ENCODE measurements at regions of chr7 and their contacts with region 1.

Region 1: GRCh38 chr7:138903186-138903820 is 77.9 kb downstream of the KIAA1549 start:
- DNase-seq: peak; percentile 86 to 91 (median 89)
- H3K4me3 ChIP-seq: no peak overlapping the region
- H3K4me3 Mint-ChIP-seq: peak overlapping the region; percentile 77 to 94 (median 85)
- H3K27ac ChIP-seq: no peak overlapping the region
- H3K27ac Mint-ChIP-seq: peak overlapping the region; percentile 57 to 99 (median 91)
- H3K4me1 ChIP-seq: peaks cover 38% of the 10 kb centered on the region
- H3K4me1 Mint-ChIP-seq: peaks cover 24 to 52% (median 31%) of the 10 kb centered on the region in 4 donors
- H3K27me3 ChIP-seq: no peaks in the 10 kb centered on the region
- H3K27me3 Mint-ChIP-seq: peaks cover 6 to 11% of the 10 kb centered on the region in 2 donors

Region 2: GRCh38 chr7:138645290-138645689 is 258.0 kb before region 1 on chr7:
- CTCF ChIA-PET with region 1: no interaction called
- POLR2A ChIA-PET with region 1: no interaction called
- intact Hi-C with region 1: no loop called
- DNase-seq: no peak
- H3K4me3 ChIP-seq: no peak overlapping the region
- H3K4me3 Mint-ChIP-seq: no peak overlapping the region
- H3K27ac ChIP-seq: no peak overlapping the region
- H3K27ac Mint-ChIP-seq: no peak overlapping the region
- H3K4me1 ChIP-seq: no peaks in the 10 kb centered on the region
- H3K4me1 Mint-ChIP-seq: peaks cover 0 to 1% (median 0%) of the 10 kb centered on the region in 4 donors
- H3K27me3 ChIP-seq: no peaks in the 10 kb centered on the region
- H3K27me3 Mint-ChIP-seq: peaks cover 0 to 4% of the 10 kb centered on the region in 2 donors

Region 3: DNA sequence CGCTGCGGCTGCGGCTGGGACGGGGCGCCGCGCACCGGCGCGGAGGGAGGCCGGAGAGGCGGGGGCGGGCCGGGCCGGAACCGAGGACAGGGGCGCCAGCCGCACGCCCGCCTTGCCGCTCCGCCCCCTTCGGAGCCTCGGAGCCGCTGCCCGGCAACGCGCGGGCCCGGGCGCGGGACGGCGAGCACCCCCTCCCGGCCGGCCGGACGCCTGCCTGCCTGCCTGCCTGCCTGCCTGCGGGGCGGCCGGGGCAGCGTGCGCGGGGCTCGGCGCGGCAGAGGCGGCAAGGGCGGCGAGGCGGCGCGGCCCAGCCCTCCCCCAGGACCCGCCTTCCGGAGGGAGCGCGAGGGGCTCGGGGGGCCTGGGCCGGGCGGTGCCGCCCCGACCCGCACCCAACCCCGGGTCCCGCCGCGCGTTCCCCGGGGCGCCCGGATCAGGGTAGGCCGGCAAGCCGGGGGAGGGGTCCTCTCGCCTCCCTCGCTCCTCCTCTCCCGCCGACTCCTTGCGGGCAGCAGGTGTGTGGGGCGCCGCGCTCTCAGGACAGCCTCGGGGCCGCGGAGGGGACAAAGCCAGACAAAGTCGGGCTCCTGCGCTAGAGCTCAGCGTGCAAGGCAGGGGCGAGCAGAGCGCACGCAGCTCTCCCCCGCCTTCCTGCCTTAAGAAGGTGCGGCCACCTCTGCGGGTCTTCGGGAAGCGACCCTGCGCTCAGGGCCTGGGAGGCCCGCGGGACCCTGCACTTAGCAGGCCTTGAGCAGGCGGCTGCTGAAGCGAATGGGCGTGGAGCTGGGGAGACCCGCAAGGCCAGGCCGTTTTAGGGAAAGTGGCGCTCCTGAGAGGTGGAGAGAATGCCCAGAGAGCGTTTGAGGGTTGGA is 78.3 kb after region 1 on chr7 and contains the start of gene KIAA1549:
- CTCF ChIA-PET with region 1: interaction called, 3 read pairs
- POLR2A ChIA-PET with region 1: no interaction called
- intact Hi-C with region 1: loop called (anchors 2 kb)
- DNase-seq: peak in 4 of 5 donors; percentile 29 to 41 (median 36)
- H3K4me3 ChIP-seq: peak within 1 kb of the TSS in 1 of 2 donors; percentile 43
- H3K4me3 Mint-ChIP-seq: peak within 1 kb of the TSS; percentile 86 to 90 (median 89)
- H3K27ac ChIP-seq: no peak within 1 kb of the TSS
- H3K27ac Mint-ChIP-seq: peak within 1 kb of the TSS in 6 of 7 donors; percentile 30 to 86 (median 62)
- H3K4me1 ChIP-seq: peaks cover 6% of the 10 kb centered on the region
- H3K4me1 Mint-ChIP-seq: peaks cover 9 to 26% (median 12%) of the 10 kb centered on the region in 4 donors
- H3K27me3 ChIP-seq: peaks cover 22% of the 10 kb centered on the region
- H3K27me3 Mint-ChIP-seq: peaks cover 29 to 36% of the 10 kb centered on the region in 2 donors
- total RNA-seq, gene KIAA1549: 0.06 to 0.11 TPM

Region 4: DNA sequence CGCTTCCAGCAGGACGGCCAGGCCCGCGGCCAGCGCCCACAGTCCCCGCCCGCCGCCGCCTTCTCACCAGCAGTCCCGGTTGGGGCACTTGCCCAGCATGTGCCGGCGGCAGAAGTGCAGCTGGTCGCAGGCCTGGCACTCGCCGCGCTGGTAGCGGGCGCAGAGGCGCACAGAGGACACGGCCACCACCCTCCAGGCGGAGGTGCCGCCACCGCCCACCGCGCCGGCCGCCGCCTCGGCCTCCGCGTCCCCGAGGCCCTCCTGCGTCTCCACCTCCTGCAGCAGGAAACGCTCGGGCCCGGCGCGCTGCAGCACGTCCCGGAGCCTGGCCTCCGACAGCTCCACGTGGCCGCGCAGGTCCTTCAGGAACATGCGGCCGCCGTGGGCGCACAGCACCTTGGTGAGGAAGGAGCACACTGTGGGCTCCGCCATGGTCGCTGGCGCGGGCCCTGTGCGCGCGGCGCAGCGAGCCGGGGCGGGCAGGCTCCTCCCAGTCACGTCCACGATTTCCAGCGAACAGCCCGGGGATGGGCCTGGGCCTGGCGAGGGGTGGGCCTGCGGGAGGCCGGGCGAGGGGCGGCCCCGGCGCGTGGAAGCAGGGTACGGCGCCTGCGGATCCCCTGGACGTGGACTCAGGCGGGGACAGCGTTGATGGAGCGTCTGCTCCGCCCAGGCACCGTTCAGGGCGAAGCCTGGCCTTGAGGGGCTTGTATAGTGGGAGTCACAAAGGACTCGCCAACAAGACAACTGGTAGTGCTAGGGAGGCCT is 132.5 kb after region 1 on chr7 and contains the start of gene ZC3HAV1L:
- CTCF ChIA-PET with region 1: no interaction called
- POLR2A ChIA-PET with region 1: no interaction called
- intact Hi-C with region 1: no loop called
- DNase-seq: peak in 4 of 5 donors; percentile 35 to 48 (median 39)
- H3K4me3 ChIP-seq: peak within 1 kb of the TSS; percentile 14 to 51
- H3K4me3 Mint-ChIP-seq: peak within 1 kb of the TSS; percentile 74 to 88 (median 84)
- H3K27ac ChIP-seq: no peak within 1 kb of the TSS
- H3K27ac Mint-ChIP-seq: peak within 1 kb of the TSS in 3 of 7 donors; percentile 32 to 79 (median 57)
- H3K4me1 ChIP-seq: peaks cover 22% of the 10 kb centered on the region
- H3K4me1 Mint-ChIP-seq: peaks cover 12 to 33% (median 16%) of the 10 kb centered on the region in 4 donors
- H3K27me3 ChIP-seq: no peaks in the 10 kb centered on the region
- H3K27me3 Mint-ChIP-seq: no peaks in the 10 kb centered on the region
- total RNA-seq, gene ZC3HAV1L: 3.8 to 4.6 TPM

Measured in CD4-positive, alpha-beta memory T cell (primary cell).